ENCODE measurements at regions of chr4 and their contacts with region 1.

Region 1: DNA sequence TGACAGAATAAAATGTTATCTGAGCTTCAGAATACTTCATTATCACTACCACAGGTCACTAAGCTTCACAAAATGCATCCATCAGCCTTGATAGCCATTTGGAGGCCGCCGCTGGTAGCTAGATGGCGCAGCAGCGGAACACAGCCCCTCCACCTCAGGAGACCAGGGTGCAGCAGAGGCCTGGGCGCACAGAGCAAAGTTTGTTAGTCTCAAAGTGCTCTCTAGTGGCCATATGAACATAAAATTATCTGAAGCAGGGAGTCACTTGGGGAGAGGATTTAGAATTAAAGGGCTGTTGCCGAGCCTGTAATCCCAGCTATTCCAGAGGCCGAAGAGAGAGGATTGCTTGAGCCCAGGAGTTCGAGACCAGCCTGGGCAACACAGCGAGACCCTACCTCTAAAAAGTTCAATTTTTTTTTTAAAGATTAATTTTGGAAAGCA is 8.1 kb upstream of the DCTD start:
- DNase-seq: peak; percentile 77
- ATAC-seq: peak; percentile 99
- H3K4me3 ChIP-seq: no peak overlapping the region
- H3K27ac ChIP-seq: no peak overlapping the region
- H3K4me1 ChIP-seq: no peaks in the 10 kb centered on the region; the same call in 1 of the 2 replicates
- H3K27me3 ChIP-seq: no peaks in the 10 kb centered on the region
- CTCF ChIP-seq: peak; percentile 80

Region 2: GRCh38 chr4:182478475-182478874 is 446.8 kb before region 1 on chr4:
- CTCF ChIA-PET with region 1: no interaction called
- POLR2A ChIA-PET with region 1: no interaction called
- intact Hi-C with region 1: loop called (anchors 5 kb)
- DNase-seq: peak; percentile 68
- ATAC-seq: peak; percentile 50
- H3K4me3 ChIP-seq: no peak overlapping the region
- H3K27ac ChIP-seq: no peak overlapping the region
- H3K4me1 ChIP-seq: no peaks in the 10 kb centered on the region
- H3K27me3 ChIP-seq: no peaks in the 10 kb centered on the region
- CTCF ChIP-seq: peak; percentile 58

Region 3: GRCh38 chr4:183402771-183403170 is 477.5 kb after region 1 on chr4:
- CTCF ChIA-PET with region 1: no interaction called
- POLR2A ChIA-PET with region 1: no interaction called
- intact Hi-C with region 1: no loop called
- DNase-seq: peak; percentile 5
- ATAC-seq: no peak
- H3K4me3 ChIP-seq: no peak overlapping the region
- H3K27ac ChIP-seq: no peak overlapping the region
- H3K4me1 ChIP-seq: peaks cover 11% of the 10 kb centered on the region
- H3K27me3 ChIP-seq: no peaks in the 10 kb centered on the region
- CTCF ChIP-seq: no peak

Measured in PC-3 (cell line).